ENCODE measurements at regions of chr2 and their contacts with region 1.

Region 1: DNA sequence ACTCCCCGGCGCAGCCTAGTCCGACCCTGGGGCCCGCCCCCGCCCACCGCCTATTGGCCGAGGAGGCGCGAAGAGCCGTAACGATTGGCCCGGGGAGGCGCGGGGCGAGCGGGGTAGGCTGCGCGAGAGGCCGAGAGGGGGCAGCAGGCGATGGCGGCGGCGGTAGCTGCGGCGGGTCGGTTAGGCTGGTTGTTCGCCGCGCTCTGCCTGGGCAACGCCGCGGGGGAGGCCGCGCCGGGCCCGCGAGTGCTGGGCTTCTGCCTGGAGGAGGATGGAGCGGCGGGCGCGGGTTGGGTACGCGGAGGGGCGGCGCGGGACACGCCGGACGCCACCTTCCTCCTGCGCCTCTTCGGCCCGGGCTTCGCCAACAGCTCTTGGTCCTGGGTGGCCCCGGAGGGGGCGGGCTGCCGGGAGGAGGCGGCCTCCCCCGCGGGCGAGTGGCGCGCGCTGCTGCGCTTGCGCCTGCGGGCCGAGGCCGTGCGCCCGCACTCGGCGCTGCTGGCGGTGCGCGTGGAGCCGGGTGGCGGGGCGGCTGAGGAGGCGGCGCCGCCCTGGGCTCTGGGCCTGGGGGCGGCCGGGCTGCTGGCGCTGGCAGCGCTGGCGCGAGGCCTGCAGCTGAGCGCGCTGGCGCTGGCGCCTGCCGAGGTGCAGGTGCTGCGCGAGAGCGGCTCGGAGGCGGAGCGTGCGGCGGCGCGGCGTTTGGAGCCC is at the start of gene CNNM3:
- DNase-seq: peak; percentile 94 to 97
- ATAC-seq: peak; percentile 88 to 97 (median 89)
- H3K4me3 ChIP-seq: peak within 1 kb of the TSS; percentile 85
- H3K4me3 Mint-ChIP-seq: peak within 1 kb of the TSS; percentile 88
- H3K27ac ChIP-seq: peak within 1 kb of the TSS; percentile 71
- H3K27ac Mint-ChIP-seq: peak within 1 kb of the TSS; percentile 82
- H3K4me1 ChIP-seq: peaks cover 46% of the 10 kb centered on the region
- H3K4me1 Mint-ChIP-seq: peaks cover 56 to 66% of the 10 kb centered on the region in 2 donors
- H3K27me3 ChIP-seq: no peaks in the 10 kb centered on the region
- H3K27me3 Mint-ChIP-seq: no peaks in the 10 kb centered on the region
- CTCF ChIP-seq: peak; percentile 60
- total RNA-seq, gene CNNM3: 33.8 to 55.2 (median 45.6) TPM

Region 2: GRCh38 chr2:96788442-96789244 is 27.6 kb before region 1 on chr2:
- intact Hi-C with region 1: no loop called
- DNase-seq: no peak
- ATAC-seq: no peak
- H3K4me3 ChIP-seq: no peak overlapping the region
- H3K4me3 Mint-ChIP-seq: no peak overlapping the region
- H3K27ac ChIP-seq: no peak overlapping the region
- H3K27ac Mint-ChIP-seq: no peak overlapping the region
- H3K4me1 ChIP-seq: no peaks in the 10 kb centered on the region
- H3K4me1 Mint-ChIP-seq: peaks cover 0 to 9% of the 10 kb centered on the region in 2 donors
- H3K27me3 ChIP-seq: no peaks in the 10 kb centered on the region
- H3K27me3 Mint-ChIP-seq: no peaks in the 10 kb centered on the region
- CTCF ChIP-seq: no peak

Region 3: GRCh38 chr2:96832754-96833507 is 16.6 kb after region 1 on chr2:
- intact Hi-C with region 1: no loop called
- DNase-seq: no peak
- ATAC-seq: no peak
- H3K4me3 ChIP-seq: no peak overlapping the region
- H3K4me3 Mint-ChIP-seq: no peak overlapping the region
- H3K27ac ChIP-seq: no peak overlapping the region
- H3K27ac Mint-ChIP-seq: no peak overlapping the region
- H3K4me1 ChIP-seq: peaks cover 2% of the 10 kb centered on the region
- H3K4me1 Mint-ChIP-seq: peaks cover 0 to 8% of the 10 kb centered on the region in 2 donors
- H3K27me3 ChIP-seq: no peaks in the 10 kb centered on the region
- H3K27me3 Mint-ChIP-seq: no peaks in the 10 kb centered on the region
- CTCF ChIP-seq: no peak

Region 4: DNA sequence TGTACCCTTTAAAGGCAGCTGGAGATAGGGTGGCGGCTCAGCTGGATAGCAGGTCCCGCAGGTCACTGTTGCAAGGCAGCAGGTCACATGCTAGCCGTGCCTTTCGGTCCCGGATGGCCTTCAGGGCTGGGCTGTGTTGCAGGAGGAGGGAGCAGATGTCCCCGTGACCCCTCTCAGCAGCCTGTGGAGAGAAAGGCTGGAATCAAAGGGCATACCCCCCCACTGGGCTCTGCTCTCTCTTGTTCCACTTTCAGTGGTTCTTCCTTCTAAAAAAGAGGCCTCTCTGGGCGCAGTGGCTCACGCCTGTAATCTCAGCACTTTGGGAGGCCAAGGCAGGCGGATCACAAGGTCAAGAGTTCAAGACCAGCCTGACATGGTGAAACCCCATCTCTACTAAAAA is 32.0 kb after region 1 on chr2:
- intact Hi-C with region 1: no loop called
- DNase-seq: no peak
- ATAC-seq: no peak
- H3K4me3 ChIP-seq: no peak overlapping the region
- H3K4me3 Mint-ChIP-seq: no peak overlapping the region
- H3K27ac ChIP-seq: no peak overlapping the region
- H3K27ac Mint-ChIP-seq: no peak overlapping the region
- H3K4me1 ChIP-seq: no peaks in the 10 kb centered on the region
- H3K4me1 Mint-ChIP-seq: no peaks in the 10 kb centered on the region
- H3K27me3 ChIP-seq: no peaks in the 10 kb centered on the region
- H3K27me3 Mint-ChIP-seq: no peaks in the 10 kb centered on the region
- CTCF ChIP-seq: no peak

Region 5: DNA sequence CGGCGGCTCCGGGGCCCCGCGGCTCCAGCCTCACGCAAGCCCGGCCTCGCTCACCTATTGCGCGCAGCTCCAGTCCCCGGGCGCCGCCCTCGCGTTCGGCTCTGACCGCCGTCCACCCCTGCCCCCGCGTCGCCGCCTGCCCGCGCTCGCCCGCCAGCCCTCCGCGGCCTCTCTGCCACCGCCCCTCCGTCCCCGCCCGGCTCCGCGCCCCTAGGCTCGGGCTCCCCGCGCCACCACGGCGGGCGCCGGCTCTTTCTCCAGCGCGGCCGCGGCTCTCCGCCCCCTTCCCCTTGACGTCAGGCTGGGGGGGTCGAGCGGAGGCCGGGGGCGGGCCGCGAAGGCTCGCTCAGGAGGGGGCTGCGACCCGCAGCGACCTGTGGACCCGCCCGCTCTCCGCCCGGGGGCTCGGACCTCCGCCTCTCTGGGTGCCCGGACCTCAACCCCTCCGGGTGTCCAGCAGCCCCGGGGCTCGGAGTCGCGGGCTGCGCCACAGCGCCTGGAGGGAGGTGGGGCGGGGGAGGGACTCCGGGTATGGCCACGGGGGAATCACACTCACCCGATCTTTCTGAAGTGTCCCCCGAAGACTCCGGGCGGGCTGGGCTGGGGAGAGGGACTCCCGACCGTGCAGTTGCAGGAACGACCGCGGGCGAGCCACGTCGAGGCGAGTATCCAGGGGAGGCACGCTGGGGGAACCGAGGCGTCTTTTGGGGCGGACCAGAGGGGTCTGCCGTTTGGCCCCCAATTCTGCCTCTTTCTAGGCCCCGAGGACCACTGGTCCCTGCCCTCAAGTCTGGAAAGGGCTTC is 53.7 kb after region 1 on chr2 and contains the start of gene SEMA4C:
- intact Hi-C with region 1: loop called (anchors 1 kb)
- DNase-seq: peak; percentile 71 to 80
- ATAC-seq: peak; percentile 54 to 63 (median 61)
- H3K4me3 ChIP-seq: peak within 1 kb of the TSS; percentile 82
- H3K4me3 Mint-ChIP-seq: peak within 1 kb of the TSS; percentile 93
- H3K27ac ChIP-seq: peak within 1 kb of the TSS; percentile 75
- H3K27ac Mint-ChIP-seq: peak within 1 kb of the TSS; percentile 89 to 90
- H3K4me1 ChIP-seq: peaks cover 61% of the 10 kb centered on the region
- H3K4me1 Mint-ChIP-seq: peaks cover 37 to 44% of the 10 kb centered on the region in 2 donors
- H3K27me3 ChIP-seq: no peaks in the 10 kb centered on the region
- H3K27me3 Mint-ChIP-seq: no peaks in the 10 kb centered on the region
- CTCF ChIP-seq: no peak
- total RNA-seq, gene SEMA4C: 51.8 to 78.1 (median 65.8) TPM

Region 6: GRCh38 chr2:96960153-96960961 is 144.1 kb after region 1 on chr2:
- intact Hi-C with region 1: loop called (anchors 5 kb)
- DNase-seq: peak; percentile 83 to 92
- ATAC-seq: peak; percentile 84 to 97 (median 89)
- H3K4me3 ChIP-seq: no peak overlapping the region
- H3K4me3 Mint-ChIP-seq: no peak overlapping the region
- H3K27ac ChIP-seq: no peak overlapping the region
- H3K27ac Mint-ChIP-seq: peak overlapping the region in 1 of 2 donors; percentile 36
- H3K4me1 ChIP-seq: peaks cover 36% of the 10 kb centered on the region
- H3K4me1 Mint-ChIP-seq: peaks cover 11 to 22% of the 10 kb centered on the region in 2 donors
- H3K27me3 ChIP-seq: no peaks in the 10 kb centered on the region
- H3K27me3 Mint-ChIP-seq: peaks cover 0 to 2% of the 10 kb centered on the region in 2 donors
- CTCF ChIP-seq: peak; percentile 89